Activated CD8-positive, alpha-beta T cell treated with anti-CD3 and anti-CD28 coated beads, Interleukin-2, amount 10 ng/mL, durations not matched to agents 7 days and 5 days (primary cell): ENCODE measurements at regions of chr1 and their contacts with region 1.

Region 1: GRCh38 chr1:59759156-59759925 is 55.4 kb upstream of the HOOK1 start:
- DNase-seq: peak; percentile 78
- ATAC-seq: peak; percentile 85
- H3K4me3 Mint-ChIP-seq: no peak overlapping the region
- H3K27ac Mint-ChIP-seq: no peak overlapping the region
- H3K4me1 Mint-ChIP-seq: peaks cover 4% of the 10 kb centered on the region
- H3K27me3 Mint-ChIP-seq: no peaks in the 10 kb centered on the region

Region 2: DNA sequence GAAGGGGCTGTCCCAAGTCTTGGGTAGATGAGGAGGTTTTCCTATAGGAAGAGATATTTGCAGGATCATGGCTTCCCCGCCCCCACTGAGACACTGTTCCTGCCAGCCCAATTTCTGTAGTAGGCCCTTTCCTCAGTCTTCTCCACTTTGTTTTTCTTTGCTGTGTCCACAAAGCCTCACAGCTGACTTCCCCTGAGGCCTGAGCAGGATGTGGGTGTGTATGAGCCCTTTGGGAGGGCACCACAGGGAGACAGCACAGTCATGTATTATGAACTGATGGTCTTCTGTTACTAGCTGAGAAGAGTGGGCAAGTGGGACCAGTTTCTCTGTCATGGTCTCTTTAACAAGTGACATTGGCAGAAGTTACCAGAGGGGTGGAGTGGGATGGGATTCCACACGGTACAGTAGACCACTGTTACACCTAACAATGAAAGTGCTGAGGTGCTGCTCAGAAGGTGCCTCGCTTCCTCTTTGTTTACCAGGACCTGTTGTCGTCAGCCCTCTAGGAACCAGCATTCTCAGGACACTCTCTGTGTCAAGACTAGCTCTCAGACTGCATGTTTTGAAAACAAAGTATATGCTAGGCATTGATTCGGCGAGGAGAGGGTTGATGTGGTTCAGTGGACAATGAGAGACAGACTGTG is 198.4 kb before region 1 on chr1:
- CTCF ChIA-PET with region 1: no interaction called
- POLR2A ChIA-PET with region 1: no interaction called
- DNase-seq: peak; percentile 52
- ATAC-seq: peak; percentile 77
- H3K4me3 Mint-ChIP-seq: no peak overlapping the region
- H3K27ac Mint-ChIP-seq: peak overlapping the region; percentile 8
- H3K4me1 Mint-ChIP-seq: peaks cover 22% of the 10 kb centered on the region
- H3K27me3 Mint-ChIP-seq: no peaks in the 10 kb centered on the region

Region 3: DNA sequence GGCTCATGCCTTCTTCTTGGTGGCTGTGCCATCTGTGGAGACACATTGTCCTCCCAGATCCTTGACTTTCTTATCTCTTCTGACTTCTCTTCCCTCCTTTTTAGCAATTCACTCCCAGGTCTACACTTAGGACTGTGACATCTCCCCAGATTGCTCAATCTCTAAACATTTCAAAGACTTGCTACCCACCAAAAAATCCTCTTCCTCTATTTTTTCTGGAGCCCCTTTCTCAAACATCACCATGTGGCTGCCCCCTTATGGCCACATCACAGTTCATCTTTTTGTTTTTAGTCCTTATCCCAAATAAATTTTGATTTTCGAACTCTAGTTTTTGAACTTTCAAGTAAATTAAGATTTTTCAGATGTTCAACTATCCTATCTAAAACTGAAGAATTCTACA is 93.2 kb before region 1 on chr1:
- CTCF ChIA-PET with region 1: no interaction called
- POLR2A ChIA-PET with region 1: no interaction called
- DNase-seq: no peak
- ATAC-seq: no peak
- H3K4me3 Mint-ChIP-seq: no peak overlapping the region
- H3K27ac Mint-ChIP-seq: no peak overlapping the region
- H3K4me1 Mint-ChIP-seq: no peaks in the 10 kb centered on the region
- H3K27me3 Mint-ChIP-seq: no peaks in the 10 kb centered on the region

Region 4: DNA sequence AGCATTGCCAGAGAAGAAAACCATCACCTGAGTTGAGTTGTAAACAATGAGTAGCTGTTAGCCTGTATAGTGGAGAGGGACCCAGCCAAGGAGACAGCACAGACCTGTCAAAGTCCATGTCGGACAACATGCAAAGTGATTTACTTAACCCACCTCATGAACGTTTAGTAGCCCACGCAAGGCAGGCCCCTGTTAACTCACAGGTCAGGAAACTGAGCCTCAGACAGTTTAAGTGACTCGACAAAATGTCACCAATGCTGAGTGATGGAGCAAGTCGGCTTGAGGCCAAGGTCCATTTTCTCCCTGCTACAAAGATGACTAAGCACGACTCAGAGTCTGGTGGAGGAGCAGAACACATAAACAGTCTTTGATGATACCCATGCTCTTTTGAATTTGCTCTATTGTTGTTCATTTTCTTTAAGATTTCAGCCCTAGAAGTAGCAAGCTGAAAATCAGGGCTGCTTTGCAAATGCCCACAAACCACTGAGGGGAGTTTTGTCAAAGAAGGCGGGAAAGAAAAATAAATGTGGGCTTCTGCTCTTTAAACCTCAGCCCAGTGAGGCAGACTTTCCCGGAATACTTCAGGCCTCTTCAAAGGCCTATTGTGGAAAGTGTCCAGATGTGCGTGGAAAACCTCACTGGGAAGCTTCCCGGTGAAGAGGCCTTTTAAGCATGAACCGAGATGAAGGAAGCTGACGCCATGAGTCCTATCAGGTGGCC is 28.4 kb before region 1 on chr1:
- CTCF ChIA-PET with region 1: interaction called, 10 read pairs
- POLR2A ChIA-PET with region 1: no interaction called
- DNase-seq: no peak
- ATAC-seq: no peak
- H3K4me3 Mint-ChIP-seq: no peak overlapping the region
- H3K27ac Mint-ChIP-seq: peak overlapping the region; percentile 53
- H3K4me1 Mint-ChIP-seq: peaks cover 18% of the 10 kb centered on the region
- H3K27me3 Mint-ChIP-seq: no peaks in the 10 kb centered on the region

Region 5: DNA sequence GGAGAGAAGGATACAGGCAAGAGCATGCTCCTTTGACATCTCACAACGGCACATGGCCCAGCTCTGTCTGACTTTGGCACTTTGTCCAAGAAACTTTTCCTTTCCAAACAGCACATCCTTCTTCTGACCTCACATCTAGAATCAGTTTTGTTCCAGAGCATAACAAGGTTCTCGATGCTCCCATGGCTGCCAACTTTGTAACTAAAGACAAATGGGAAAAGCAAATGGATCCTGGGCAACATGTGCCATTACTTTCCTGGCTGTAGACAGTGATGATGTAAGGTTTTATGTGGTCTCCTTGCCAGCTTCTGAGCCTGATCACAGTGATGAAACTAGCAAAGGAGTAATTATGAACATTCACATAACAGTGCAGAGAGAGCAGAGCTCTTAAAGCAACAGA is 486.0 kb after region 1 on chr1:
- CTCF ChIA-PET with region 1: no interaction called
- POLR2A ChIA-PET with region 1: no interaction called
- DNase-seq: no peak
- ATAC-seq: no peak
- H3K4me3 Mint-ChIP-seq: no peak overlapping the region
- H3K27ac Mint-ChIP-seq: no peak overlapping the region
- H3K4me1 Mint-ChIP-seq: no peaks in the 10 kb centered on the region
- H3K27me3 Mint-ChIP-seq: no peaks in the 10 kb centered on the region